Activated CD4-positive, alpha-beta T cell treated with anti-CD3 and anti-CD28 coated beads, Interleukin-2, amount 10 ng/mL, durations not matched to agents 24 days and 14 days (primary cell): ENCODE measurements at regions of chr6 and their contacts with region 1.

Region 1: DNA sequence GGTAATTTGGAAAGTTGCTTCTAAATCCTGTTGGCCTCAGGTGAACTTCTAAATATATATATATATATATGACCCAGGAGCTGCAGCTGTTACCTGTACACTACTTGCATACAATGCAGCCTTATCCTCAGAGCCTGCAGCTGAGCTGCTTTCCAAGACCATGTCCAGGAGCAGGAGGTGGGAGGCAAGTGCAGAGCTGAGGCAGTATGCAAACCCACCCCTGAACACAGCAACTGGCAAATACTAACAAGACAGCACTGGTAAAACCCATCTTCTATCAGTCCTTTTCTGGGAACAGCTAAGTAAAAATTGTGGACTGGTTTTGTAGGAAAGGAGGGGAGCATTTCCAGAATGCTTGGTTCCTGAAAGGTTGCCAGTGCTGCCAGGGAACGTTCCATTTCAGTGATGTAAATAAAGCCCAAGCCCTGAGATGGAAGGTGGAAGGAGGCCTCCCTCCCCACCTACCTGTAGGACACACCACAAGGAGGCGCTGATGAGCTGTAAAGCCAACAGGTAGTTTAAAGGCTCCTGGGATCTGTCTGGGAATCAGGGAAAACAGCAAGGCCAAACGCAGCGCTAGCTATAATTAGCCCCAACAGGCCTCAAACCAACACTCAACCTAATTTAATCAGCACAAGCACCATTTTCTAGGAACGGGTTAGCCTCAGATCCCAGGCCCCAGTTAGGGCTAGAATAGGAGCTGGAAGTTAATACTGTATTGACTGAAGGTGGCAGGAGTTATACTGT is 93.8 kb upstream of the MAP7 start:
- DNase-seq: peak; percentile 94
- H3K4me3 Mint-ChIP-seq: no peak overlapping the region
- H3K27ac Mint-ChIP-seq: no peak overlapping the region
- H3K4me1 Mint-ChIP-seq: peaks cover 7% of the 10 kb centered on the region
- H3K27me3 Mint-ChIP-seq: no peaks in the 10 kb centered on the region

Region 2: DNA sequence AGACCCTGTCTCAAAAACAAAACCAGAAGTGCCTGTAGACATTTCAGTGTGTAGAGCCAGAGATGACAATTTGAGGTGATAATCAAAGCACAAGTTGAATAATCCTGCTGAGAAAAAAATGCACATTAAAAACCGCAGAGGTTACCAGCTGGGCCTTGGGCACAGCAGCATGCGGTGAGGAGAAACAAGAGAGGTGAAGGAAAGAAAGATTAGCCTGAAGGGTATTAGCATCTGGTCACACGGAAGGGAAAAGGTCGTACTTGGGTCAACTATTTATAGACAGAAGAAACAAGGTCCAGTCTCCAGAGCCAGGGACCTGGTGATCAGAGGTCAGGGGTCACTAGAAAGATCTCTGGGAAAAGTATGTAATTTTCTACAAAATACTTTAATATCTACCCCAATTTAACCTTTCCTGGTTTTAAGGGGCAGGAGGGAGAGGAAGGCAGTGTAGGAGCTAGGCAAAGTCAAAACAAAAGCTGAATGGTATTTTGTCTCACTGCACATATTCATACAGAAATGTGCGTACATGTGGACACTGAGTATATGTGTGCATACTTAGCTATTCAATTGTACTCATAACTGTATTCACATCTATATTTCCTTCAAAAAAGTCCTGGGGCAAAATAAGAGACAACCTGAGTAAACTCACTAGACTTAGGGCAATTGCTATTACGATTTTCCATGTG is 103.9 kb before region 1 on chr6:
- intact Hi-C with region 1: no loop called
- DNase-seq: no peak
- H3K4me3 Mint-ChIP-seq: no peak overlapping the region
- H3K27ac Mint-ChIP-seq: no peak overlapping the region
- H3K4me1 Mint-ChIP-seq: peaks cover 2% of the 10 kb centered on the region
- H3K27me3 Mint-ChIP-seq: peaks cover 31% of the 10 kb centered on the region

Region 3: GRCh38 chr6:136593748-136594490 is 50.1 kb before region 1 on chr6:
- intact Hi-C with region 1: loop called (anchors 5 kb)
- DNase-seq: peak; percentile 83
- H3K4me3 Mint-ChIP-seq: peak overlapping the region; percentile 73
- H3K27ac Mint-ChIP-seq: peak overlapping the region; percentile 96
- H3K4me1 Mint-ChIP-seq: peaks cover 35% of the 10 kb centered on the region
- H3K27me3 Mint-ChIP-seq: no peaks in the 10 kb centered on the region

Region 4: DNA sequence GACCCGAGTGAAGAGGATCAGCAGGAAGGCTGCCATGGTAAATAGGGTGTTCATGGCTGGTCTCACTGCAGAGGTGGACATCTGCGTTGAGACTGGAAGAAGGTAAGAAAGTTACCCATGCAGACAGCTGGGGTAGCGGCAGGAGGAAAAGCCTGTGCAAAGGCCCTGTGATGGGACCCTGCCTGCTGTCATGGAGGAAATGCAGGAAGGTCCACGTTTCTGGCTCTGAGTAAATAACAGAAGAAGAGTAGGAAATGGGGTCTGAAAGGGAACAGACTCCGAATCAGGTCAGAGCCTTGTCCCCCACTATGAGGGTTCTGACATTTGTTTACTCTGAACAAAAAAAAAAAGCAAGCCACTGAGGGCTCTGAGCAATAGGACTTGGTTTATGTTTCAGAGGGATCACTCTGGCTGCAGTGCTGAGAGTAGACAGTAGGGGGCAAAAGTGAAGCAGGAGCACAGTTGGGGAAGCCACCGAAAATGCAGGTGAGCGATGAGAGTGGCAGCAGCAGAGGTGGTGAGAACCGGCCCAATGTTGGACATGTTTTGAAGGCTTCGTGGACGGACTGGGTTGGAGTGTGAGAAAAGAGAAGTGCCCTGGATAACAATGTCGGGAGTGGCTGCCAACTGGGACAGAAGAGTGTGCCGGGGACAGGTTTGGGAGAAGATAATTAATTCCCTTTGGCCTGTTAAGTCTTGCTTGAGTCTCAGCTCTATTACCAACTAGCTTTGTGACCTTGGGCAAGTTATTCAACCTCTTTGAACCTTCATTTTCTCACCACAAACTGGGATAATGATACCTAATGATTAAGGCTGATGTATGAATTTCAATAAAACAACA is 35.9 kb before region 1 on chr6:
- intact Hi-C with region 1: loop called (anchors 2 kb)
- DNase-seq: peak; percentile 94
- H3K4me3 Mint-ChIP-seq: no peak overlapping the region
- H3K27ac Mint-ChIP-seq: no peak overlapping the region
- H3K4me1 Mint-ChIP-seq: peaks cover 15% of the 10 kb centered on the region
- H3K27me3 Mint-ChIP-seq: no peaks in the 10 kb centered on the region

Region 5: GRCh38 chr6:136696238-136696637 is 52.2 kb after region 1 on chr6:
- intact Hi-C with region 1: loop called (anchors 5 kb)
- DNase-seq: no peak
- H3K4me3 Mint-ChIP-seq: no peak overlapping the region
- H3K27ac Mint-ChIP-seq: no peak overlapping the region
- H3K4me1 Mint-ChIP-seq: peaks cover 19% of the 10 kb centered on the region
- H3K27me3 Mint-ChIP-seq: no peaks in the 10 kb centered on the region

Region 6: GRCh38 chr6:136737871-136738691 is 94.1 kb after region 1 on chr6:
- intact Hi-C with region 1: no loop called
- DNase-seq: peak; percentile 38
- H3K4me3 Mint-ChIP-seq: no peak overlapping the region
- H3K27ac Mint-ChIP-seq: no peak overlapping the region
- H3K4me1 Mint-ChIP-seq: peaks cover 36% of the 10 kb centered on the region
- H3K27me3 Mint-ChIP-seq: no peaks in the 10 kb centered on the region

Region 7: GRCh38 chr6:136921936-136922684 is 278.1 kb after region 1 on chr6 and contains the start of gene SLC35D3:
- intact Hi-C with region 1: loop called (anchors 2 kb)
- DNase-seq: peak; percentile 72
- H3K4me3 Mint-ChIP-seq: peak within 1 kb of the TSS; percentile 83
- H3K27ac Mint-ChIP-seq: no peak within 1 kb of the TSS
- H3K4me1 Mint-ChIP-seq: peaks cover 22% of the 10 kb centered on the region
- H3K27me3 Mint-ChIP-seq: peaks cover 61% of the 10 kb centered on the region
- total RNA-seq, gene SLC35D3: not detected in 2 replicates